Naive thymus-derived CD4-positive, alpha-beta T cell (primary cell): ENCODE measurements at regions of chr7 and their contacts with region 1.

Region 1: DNA sequence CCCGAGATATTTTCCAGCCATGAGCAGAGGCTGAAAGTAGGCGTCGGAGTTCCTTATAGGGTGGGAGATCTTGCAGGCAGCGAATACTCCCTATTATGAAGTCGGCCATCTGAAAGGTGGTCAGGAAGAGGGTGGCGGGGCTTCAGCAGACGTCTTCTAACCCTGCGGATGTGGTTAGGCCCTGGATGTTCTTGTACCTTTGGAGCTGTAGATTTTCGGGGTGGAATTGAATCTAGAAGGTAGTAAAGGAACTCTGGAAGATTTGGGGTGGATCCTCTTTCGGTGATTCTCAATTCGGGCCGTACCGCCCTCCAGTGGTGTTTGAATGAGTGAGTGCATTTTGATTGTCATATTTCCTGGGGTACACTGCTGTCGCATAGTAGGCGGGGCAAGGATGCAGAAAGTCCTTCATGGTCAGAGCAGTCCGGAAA is 635 bp downstream of the NUP205 start:
- DNase-seq: peak; percentile 36 to 71 (median 66)
- ATAC-seq: peak; percentile 78
- H3K4me3 ChIP-seq: peak overlapping the region; percentile 89
- H3K4me3 Mint-ChIP-seq: no peak overlapping the region
- H3K27ac ChIP-seq: peak overlapping the region; percentile 92
- H3K27ac Mint-ChIP-seq: no peak overlapping the region
- H3K4me1 ChIP-seq: peaks cover 6% of the 10 kb centered on the region in 2 donors
- H3K4me1 Mint-ChIP-seq: peaks cover 10 to 35% (median 25%) of the 10 kb centered on the region in 7 donors
- H3K27me3 ChIP-seq: no peaks in the 10 kb centered on the region
- H3K27me3 Mint-ChIP-seq: peaks cover 0 to 6% (median 0%) of the 10 kb centered on the region in 5 donors

Region 2: GRCh38 chr7:134126966-134127848 is 1431.1 kb before region 1 on chr7 and contains the start of gene LRGUK:
- CTCF ChIA-PET with region 1: no interaction called
- POLR2A ChIA-PET with region 1: no interaction called
- intact Hi-C with region 1: loop called (anchors 2 to 5 kb)
- DNase-seq: peak; percentile 55 to 82 (median 77)
- ATAC-seq: peak; percentile 100
- H3K4me3 ChIP-seq: peak within 1 kb of the TSS; percentile 93
- H3K4me3 Mint-ChIP-seq: peak within 1 kb of the TSS; percentile 80 to 96 (median 88)
- H3K27ac ChIP-seq: no peak within 1 kb of the TSS
- H3K27ac Mint-ChIP-seq: peak within 1 kb of the TSS in 3 of 9 donors; percentile 16 to 65 (median 46)
- H3K4me1 ChIP-seq: peaks cover 3 to 9% of the 10 kb centered on the region in 2 donors
- H3K4me1 Mint-ChIP-seq: peaks cover 15 to 26% (median 18%) of the 10 kb centered on the region in 7 donors
- H3K27me3 ChIP-seq: no peaks in the 10 kb centered on the region
- H3K27me3 Mint-ChIP-seq: peaks cover 20 to 44% (median 23%) of the 10 kb centered on the region in 5 donors
- total RNA-seq, gene LRGUK: 0.22 to 1.0 (median 0.43) TPM

Region 3: DNA sequence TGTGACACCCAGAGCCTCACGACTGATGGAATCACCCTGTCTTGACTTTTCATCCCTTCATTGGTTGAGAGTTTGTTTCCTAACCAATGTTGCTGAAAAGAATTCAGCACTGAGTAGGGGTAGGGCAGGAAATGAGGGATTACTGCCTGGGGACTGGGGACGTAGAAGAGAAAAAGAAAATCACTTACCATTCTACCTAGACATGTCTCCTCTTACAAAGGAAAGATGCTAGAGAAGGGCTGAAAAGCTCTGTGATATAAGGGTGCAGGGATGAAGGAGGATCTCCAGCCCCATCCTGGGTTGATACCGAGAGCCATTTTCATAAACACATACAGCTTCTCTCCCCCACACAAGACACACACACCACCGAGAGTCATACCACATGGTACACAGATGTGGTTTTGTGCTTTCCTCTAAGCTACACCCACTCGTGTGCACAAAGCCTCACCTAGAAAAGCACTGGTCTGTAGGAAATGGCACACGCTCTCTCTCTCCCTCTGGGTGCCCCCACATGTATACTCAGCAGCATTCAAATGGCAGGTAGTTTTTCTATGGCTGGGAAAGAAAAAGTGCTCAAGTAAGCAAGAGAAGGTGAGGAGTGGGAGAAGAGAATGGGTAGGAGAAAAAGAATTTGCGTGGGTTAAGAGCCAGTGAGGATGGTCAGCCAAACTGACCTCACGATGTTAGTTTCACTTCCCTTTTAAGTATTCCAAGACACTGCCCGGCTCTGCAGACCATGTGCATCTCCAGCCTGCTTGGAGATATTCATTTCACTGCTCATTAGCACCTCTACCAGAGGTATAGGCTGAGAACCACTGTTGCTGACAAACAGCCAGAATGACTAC is 693.1 kb before region 1 on chr7:
- CTCF ChIA-PET with region 1: no interaction called
- POLR2A ChIA-PET with region 1: no interaction called
- intact Hi-C with region 1: loop called in 1 of 2 experiments (anchors 10 kb)
- DNase-seq: peak in 8 of 9 donors; percentile 43 to 79 (median 76)
- ATAC-seq: peak; percentile 91
- H3K4me3 ChIP-seq: peak overlapping the region; percentile 51
- H3K4me3 Mint-ChIP-seq: peak overlapping the region; percentile 64 to 90 (median 84)
- H3K27ac ChIP-seq: peak overlapping the region; percentile 68
- H3K27ac Mint-ChIP-seq: peak overlapping the region; percentile 88 to 96 (median 92)
- H3K4me1 ChIP-seq: peaks cover 0 to 13% of the 10 kb centered on the region in 2 donors
- H3K4me1 Mint-ChIP-seq: peaks cover 8 to 76% (median 58%) of the 10 kb centered on the region in 7 donors
- H3K27me3 ChIP-seq: no peaks in the 10 kb centered on the region
- H3K27me3 Mint-ChIP-seq: no peaks in the 10 kb centered on the region

Region 4: DNA sequence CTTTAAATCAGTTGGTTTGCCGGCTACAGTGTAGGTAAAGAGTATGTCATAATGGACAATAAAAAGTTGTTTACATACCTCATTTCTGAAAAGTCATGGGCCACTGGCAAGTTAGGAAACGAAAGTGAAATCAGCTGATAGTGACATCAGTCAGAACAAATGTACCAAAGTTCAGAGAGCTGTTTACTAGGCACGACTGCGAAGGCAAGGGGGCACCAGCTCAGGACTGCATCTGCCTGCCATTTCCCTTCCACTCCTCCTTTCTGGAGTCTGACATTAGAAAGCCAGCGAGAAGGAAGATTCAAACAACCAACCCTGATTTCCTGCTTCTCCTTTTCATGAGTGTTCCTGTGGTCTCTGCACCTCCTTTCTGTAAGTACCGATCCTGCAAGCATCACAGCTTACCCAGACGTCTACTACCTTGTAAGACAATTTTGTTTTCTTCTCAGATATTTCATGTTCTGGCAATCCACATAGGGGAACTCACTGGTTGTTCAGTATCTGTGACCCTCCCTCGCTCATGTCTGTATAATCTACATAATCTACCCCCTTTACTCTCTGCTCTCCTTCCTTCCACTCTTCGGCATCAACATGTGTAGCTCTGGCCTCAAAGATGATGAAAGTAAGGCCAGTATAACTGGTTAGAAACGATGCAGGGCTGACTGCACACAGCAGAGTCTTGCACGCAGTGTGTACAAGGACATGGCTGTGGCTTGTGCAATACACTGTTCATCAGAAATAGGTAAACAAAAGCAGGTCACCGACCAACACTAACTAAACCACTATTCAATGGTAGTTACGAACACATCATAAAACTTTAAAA is 410.2 kb before region 1 on chr7 and contains the start of gene TMEM140:
- CTCF ChIA-PET with region 1: no interaction called
- POLR2A ChIA-PET with region 1: no interaction called
- intact Hi-C with region 1: loop called (anchors 1 kb)
- DNase-seq: peak in 8 of 9 donors; percentile 56 to 88 (median 80)
- ATAC-seq: peak; percentile 84
- H3K4me3 ChIP-seq: peak within 1 kb of the TSS; percentile 71
- H3K4me3 Mint-ChIP-seq: peak within 1 kb of the TSS; percentile 83 to 95 (median 92)
- H3K27ac ChIP-seq: peak within 1 kb of the TSS; percentile 90
- H3K27ac Mint-ChIP-seq: peak within 1 kb of the TSS; percentile 93 to 99 (median 97)
- H3K4me1 ChIP-seq: peaks cover 31 to 38% of the 10 kb centered on the region in 2 donors
- H3K4me1 Mint-ChIP-seq: peaks cover 41 to 74% (median 70%) of the 10 kb centered on the region in 7 donors
- H3K27me3 ChIP-seq: no peaks in the 10 kb centered on the region
- H3K27me3 Mint-ChIP-seq: no peaks in the 10 kb centered on the region
- total RNA-seq, gene TMEM140: 17.8 to 44.7 (median 20.4) TPM

Region 5: GRCh38 chr7:135281363-135281949 is 276.9 kb before region 1 on chr7:
- CTCF ChIA-PET with region 1: interaction called, 6 read pairs
- POLR2A ChIA-PET with region 1: interaction called, 6 read pairs
- intact Hi-C with region 1: loop called (anchors 1 kb)
- DNase-seq: peak; percentile 26 to 81 (median 73)
- ATAC-seq: peak; percentile 99
- H3K4me3 ChIP-seq: no peak overlapping the region
- H3K4me3 Mint-ChIP-seq: peak overlapping the region in 3 of 10 donors; percentile 4 to 42 (median 8)
- H3K27ac ChIP-seq: no peak overlapping the region
- H3K27ac Mint-ChIP-seq: peak overlapping the region in 2 of 9 donors; percentile 11 to 51
- H3K4me1 ChIP-seq: no peaks in the 10 kb centered on the region
- H3K4me1 Mint-ChIP-seq: peaks cover 4 to 17% (median 12%) of the 10 kb centered on the region in 7 donors
- H3K27me3 ChIP-seq: no peaks in the 10 kb centered on the region
- H3K27me3 Mint-ChIP-seq: peaks cover 4 to 10% (median 9%) of the 10 kb centered on the region in 5 donors

Region 6: GRCh38 chr7:135509903-135510602 is 48.3 kb before region 1 on chr7 and contains the start of gene CNOT4:
- CTCF ChIA-PET with region 1: interaction called, 3 read pairs
- POLR2A ChIA-PET with region 1: interaction called, 4 read pairs
- intact Hi-C with region 1: loop called (anchors 1 kb)
- DNase-seq: peak; percentile 82 to 97 (median 92)
- ATAC-seq: peak; percentile 96
- H3K4me3 ChIP-seq: peak within 1 kb of the TSS; percentile 78
- H3K4me3 Mint-ChIP-seq: no peak within 1 kb of the TSS
- H3K27ac ChIP-seq: peak within 1 kb of the TSS; percentile 97
- H3K27ac Mint-ChIP-seq: no peak within 1 kb of the TSS
- H3K4me1 ChIP-seq: peaks cover 12 to 15% of the 10 kb centered on the region in 2 donors
- H3K4me1 Mint-ChIP-seq: peaks cover 3 to 21% (median 14%) of the 10 kb centered on the region in 7 donors
- H3K27me3 ChIP-seq: no peaks in the 10 kb centered on the region
- H3K27me3 Mint-ChIP-seq: no peaks in the 10 kb centered on the region
- total RNA-seq, gene CNOT4: 28.7 to 39.4 (median 38.3) TPM